MCF 10A (cell line): ENCODE measurements at regions of chr20 and their contacts with region 1.

Region 1: GRCh38 chr20:17648791-17649730 is 33.0 kb downstream of the RRBP1 start:
- DNase-seq: no peak
- H3K4me3 Mint-ChIP-seq: no peak overlapping the region
- H3K27ac Mint-ChIP-seq: no peak overlapping the region
- H3K4me1 Mint-ChIP-seq: no peaks in the 10 kb centered on the region
- H3K27me3 Mint-ChIP-seq: no peaks in the 10 kb centered on the region
- CTCF ChIP-seq: peak; percentile 26

Region 2: GRCh38 chr20:17628101-17628841 is 20.8 kb before region 1 on chr20:
- CTCF ChIA-PET with region 1: interaction called, 10 read pairs
- POLR2A ChIA-PET with region 1: no interaction called
- intact Hi-C with region 1: no loop called
- DNase-seq: no peak
- H3K4me3 Mint-ChIP-seq: no peak overlapping the region
- H3K27ac Mint-ChIP-seq: peak overlapping the region; percentile 23
- H3K4me1 Mint-ChIP-seq: no peaks in the 10 kb centered on the region
- H3K27me3 Mint-ChIP-seq: no peaks in the 10 kb centered on the region
- CTCF ChIP-seq: no peak

Region 3: DNA sequence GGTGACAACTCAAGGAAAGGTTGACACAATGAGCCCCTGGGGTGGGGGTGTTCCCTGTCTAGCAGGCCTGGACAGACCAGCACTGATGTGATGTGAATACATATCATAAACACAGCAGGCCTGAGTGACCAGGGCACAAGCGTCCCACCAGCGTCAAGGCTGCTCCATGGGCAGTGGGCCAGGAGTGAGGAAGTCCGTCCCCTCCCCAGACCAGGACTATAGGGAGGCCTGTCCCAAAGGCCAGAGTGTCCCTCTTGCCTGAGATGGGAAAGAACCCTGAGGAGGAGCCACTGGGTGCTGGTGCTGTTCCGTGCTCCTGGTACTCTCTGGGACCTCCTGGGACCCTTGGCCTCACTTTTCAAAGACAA is 11.7 kb before region 1 on chr20:
- CTCF ChIA-PET with region 1: interaction called, 20 read pairs
- POLR2A ChIA-PET with region 1: no interaction called
- intact Hi-C with region 1: no loop called
- DNase-seq: no peak
- H3K4me3 Mint-ChIP-seq: no peak overlapping the region
- H3K27ac Mint-ChIP-seq: no peak overlapping the region
- H3K4me1 Mint-ChIP-seq: no peaks in the 10 kb centered on the region
- H3K27me3 Mint-ChIP-seq: no peaks in the 10 kb centered on the region
- CTCF ChIP-seq: no peak